T-cell (primary cell): ENCODE measurements at regions of chr3 and their contacts with region 1.

Region 1: GRCh38 chr3:184561061-184561912 is at the start of gene EPHB3:
- DNase-seq: peak; percentile 74 to 93 (median 87)
- ATAC-seq: peak; percentile 74 to 84 (median 79)
- H3K4me3 ChIP-seq: peak within 1 kb of the TSS; percentile 46 to 56
- H3K4me3 Mint-ChIP-seq: peak within 1 kb of the TSS; percentile 66 to 81 (median 75)
- H3K27ac ChIP-seq: no peak within 1 kb of the TSS
- H3K27ac Mint-ChIP-seq: peak within 1 kb of the TSS; percentile 56 to 69
- H3K4me1 ChIP-seq: peaks cover 19 to 59% of the 10 kb centered on the region in 2 experiments
- H3K4me1 Mint-ChIP-seq: peaks cover 38 to 52% (median 44%) of the 10 kb centered on the region in 3 donors
- H3K27me3 ChIP-seq: peaks cover 0 to 82% of the 10 kb centered on the region in 2 experiments
- H3K27me3 Mint-ChIP-seq: peaks cover 19 to 55% of the 10 kb centered on the region in 2 donors
- total RNA-seq, gene EPHB3: 0.35 to 1.1 (median 0.55) TPM

Region 2: DNA sequence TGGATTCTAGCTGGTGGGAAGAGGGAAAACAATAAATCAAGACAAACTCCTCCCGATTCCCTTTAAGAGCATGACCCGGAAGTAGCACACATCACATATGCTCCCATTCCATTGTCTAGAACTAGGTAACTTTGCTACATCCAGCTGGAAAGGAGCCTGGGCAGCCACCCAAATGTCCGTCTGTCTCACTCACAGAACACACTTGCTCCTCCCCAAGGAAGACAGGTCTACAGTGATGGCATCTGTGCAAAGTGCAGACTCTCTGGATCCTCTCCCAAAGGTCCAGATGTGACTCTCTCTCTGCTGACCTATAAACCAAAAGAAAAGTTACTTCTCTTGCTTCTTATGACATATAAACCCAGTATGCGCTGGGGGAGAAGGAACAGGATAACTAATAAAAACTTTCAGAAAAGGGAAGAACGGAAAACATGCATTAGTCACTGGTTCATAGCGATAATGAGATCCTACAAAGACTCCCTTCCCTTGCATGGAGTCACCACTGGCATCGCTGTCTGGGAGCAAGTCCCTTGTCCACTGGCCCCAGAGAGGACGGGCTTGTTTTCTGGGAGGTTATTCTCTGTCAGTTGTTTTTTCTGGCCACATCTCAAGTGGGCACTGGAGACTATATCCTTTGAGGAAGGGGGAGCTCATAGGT is 29.5 kb before region 1 on chr3:
- CTCF ChIA-PET with region 1: no interaction called
- POLR2A ChIA-PET with region 1: no interaction called
- DNase-seq: no peak
- ATAC-seq: no peak
- H3K4me3 ChIP-seq: no peak overlapping the region
- H3K4me3 Mint-ChIP-seq: no peak overlapping the region
- H3K27ac ChIP-seq: no peak overlapping the region
- H3K27ac Mint-ChIP-seq: no peak overlapping the region
- H3K4me1 ChIP-seq: no peaks in the 10 kb centered on the region
- H3K4me1 Mint-ChIP-seq: no peaks in the 10 kb centered on the region
- H3K27me3 ChIP-seq: peaks cover 0 to 25% of the 10 kb centered on the region in 2 experiments
- H3K27me3 Mint-ChIP-seq: peaks cover 25 to 42% of the 10 kb centered on the region in 2 donors

Region 3: GRCh38 chr3:184679056-184679816 is 117.9 kb after region 1 on chr3:
- CTCF ChIA-PET with region 1: no interaction called
- POLR2A ChIA-PET with region 1: no interaction called
- DNase-seq: no peak
- ATAC-seq: no peak
- H3K4me3 ChIP-seq: no peak overlapping the region
- H3K4me3 Mint-ChIP-seq: no peak overlapping the region
- H3K27ac ChIP-seq: no peak overlapping the region
- H3K27ac Mint-ChIP-seq: no peak overlapping the region
- H3K4me1 ChIP-seq: no peaks in the 10 kb centered on the region
- H3K4me1 Mint-ChIP-seq: peaks cover 0 to 4% (median 0%) of the 10 kb centered on the region in 3 donors
- H3K27me3 ChIP-seq: peaks cover 0 to 17% of the 10 kb centered on the region in 2 experiments
- H3K27me3 Mint-ChIP-seq: peaks cover 4 to 9% of the 10 kb centered on the region in 2 donors

Region 4: DNA sequence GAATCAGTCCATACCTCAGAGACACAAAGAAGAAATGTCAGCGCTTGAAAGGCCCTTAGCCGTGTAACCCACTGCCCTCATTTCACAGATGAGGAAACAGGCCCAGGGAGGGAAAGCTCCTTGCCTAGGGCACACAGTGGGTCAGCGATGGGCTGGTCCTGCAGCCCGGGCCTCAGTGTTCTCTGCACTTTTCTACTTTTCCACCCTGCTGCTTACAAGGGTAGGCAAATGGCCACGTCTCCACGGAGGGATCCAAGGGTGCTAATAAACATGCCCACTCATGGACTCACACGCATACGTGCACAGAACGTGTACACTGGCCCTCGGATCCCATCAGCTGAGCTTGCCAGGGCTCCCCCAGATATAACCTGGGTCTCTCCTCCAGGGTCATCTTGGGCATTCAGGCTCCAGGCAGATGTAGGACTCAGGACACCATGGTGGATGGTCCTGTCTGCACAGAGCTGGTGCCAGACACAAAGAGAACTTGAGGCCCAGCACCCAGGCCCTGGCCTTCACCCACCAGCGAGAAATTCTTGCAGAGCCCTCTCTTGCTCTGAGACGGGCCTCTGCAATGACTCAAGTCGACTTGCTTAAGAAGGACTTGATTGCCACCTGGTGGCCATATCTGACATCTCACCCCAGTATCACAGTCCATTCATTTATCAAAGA is 216.2 kb after region 1 on chr3:
- CTCF ChIA-PET with region 1: interaction called, 6 to 15 read pairs
- POLR2A ChIA-PET with region 1: no interaction called
- DNase-seq: peak; percentile 49 to 91 (median 78)
- ATAC-seq: peak; percentile 89 to 99 (median 94)
- H3K4me3 ChIP-seq: no peak overlapping the region
- H3K4me3 Mint-ChIP-seq: no peak overlapping the region
- H3K27ac ChIP-seq: no peak overlapping the region
- H3K27ac Mint-ChIP-seq: no peak overlapping the region
- H3K4me1 ChIP-seq: peaks cover 0 to 4% of the 10 kb centered on the region in 2 experiments
- H3K4me1 Mint-ChIP-seq: peaks cover 0 to 7% (median 0%) of the 10 kb centered on the region in 3 donors
- H3K27me3 ChIP-seq: peaks cover 0 to 47% of the 10 kb centered on the region in 2 experiments
- H3K27me3 Mint-ChIP-seq: peaks cover 11 to 33% of the 10 kb centered on the region in 2 donors

Region 5: GRCh38 chr3:184804801-184805200 is 243.5 kb after region 1 on chr3:
- CTCF ChIA-PET with region 1: interaction called, 5 to 11 read pairs
- POLR2A ChIA-PET with region 1: no interaction called
- DNase-seq: no peak
- ATAC-seq: no peak
- H3K4me3 ChIP-seq: no peak overlapping the region
- H3K4me3 Mint-ChIP-seq: no peak overlapping the region
- H3K27ac ChIP-seq: no peak overlapping the region
- H3K27ac Mint-ChIP-seq: no peak overlapping the region
- H3K4me1 ChIP-seq: no peaks in the 10 kb centered on the region
- H3K4me1 Mint-ChIP-seq: no peaks in the 10 kb centered on the region
- H3K27me3 ChIP-seq: no peaks in the 10 kb centered on the region
- H3K27me3 Mint-ChIP-seq: peaks cover 16 to 18% of the 10 kb centered on the region in 2 donors